A673 (cell line): ENCODE measurements at regions of chr5 and their contacts with region 1.

Region 1: GRCh38 chr5:76175051-76175666 is 92.0 kb downstream of the SV2C start:
- DNase-seq: peak; percentile 68
- H3K4me3 ChIP-seq: no peak overlapping the region
- H3K27ac ChIP-seq: no peak overlapping the region
- H3K4me1 ChIP-seq: no peaks in the 10 kb centered on the region
- H3K27me3 ChIP-seq: no peaks in the 10 kb centered on the region
- CTCF ChIP-seq: peak; percentile 92

Region 2: DNA sequence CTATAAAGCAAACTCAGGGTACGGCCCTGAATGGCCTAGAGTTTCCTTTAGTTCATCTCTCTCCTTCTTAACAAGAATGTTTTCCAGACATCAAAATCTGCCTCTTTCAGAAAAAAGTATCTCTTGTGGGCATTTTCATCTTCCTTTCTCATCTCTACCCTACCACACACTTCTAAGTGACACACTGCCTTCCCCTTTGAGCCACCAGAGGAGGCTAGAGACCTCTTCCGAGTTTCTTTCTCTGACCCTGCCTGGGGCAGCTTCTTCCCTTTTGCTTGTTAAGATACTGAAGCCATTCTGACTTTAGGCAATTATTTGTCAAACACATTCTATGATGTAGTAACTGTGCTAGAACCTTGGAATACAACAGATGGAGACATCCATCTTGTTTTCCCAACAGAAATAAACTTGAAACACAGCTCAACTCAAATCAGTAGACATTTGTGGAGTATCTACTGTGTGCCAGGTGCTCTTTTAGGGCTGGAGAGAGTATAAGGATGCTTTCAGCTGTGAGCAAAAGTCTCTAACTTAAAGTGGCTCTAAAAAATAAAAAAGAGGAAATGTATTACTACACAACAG is 100.6 kb before region 1 on chr5:
- CTCF ChIA-PET with region 1: interaction called, 10 read pairs
- POLR2A ChIA-PET with region 1: no interaction called
- intact Hi-C with region 1: no loop called
- DNase-seq: peak; percentile 56
- H3K4me3 ChIP-seq: no peak overlapping the region
- H3K27ac ChIP-seq: no peak overlapping the region
- H3K4me1 ChIP-seq: no peaks in the 10 kb centered on the region
- H3K27me3 ChIP-seq: peaks cover 30% of the 10 kb centered on the region
- CTCF ChIP-seq: peak; percentile 74

Region 3: DNA sequence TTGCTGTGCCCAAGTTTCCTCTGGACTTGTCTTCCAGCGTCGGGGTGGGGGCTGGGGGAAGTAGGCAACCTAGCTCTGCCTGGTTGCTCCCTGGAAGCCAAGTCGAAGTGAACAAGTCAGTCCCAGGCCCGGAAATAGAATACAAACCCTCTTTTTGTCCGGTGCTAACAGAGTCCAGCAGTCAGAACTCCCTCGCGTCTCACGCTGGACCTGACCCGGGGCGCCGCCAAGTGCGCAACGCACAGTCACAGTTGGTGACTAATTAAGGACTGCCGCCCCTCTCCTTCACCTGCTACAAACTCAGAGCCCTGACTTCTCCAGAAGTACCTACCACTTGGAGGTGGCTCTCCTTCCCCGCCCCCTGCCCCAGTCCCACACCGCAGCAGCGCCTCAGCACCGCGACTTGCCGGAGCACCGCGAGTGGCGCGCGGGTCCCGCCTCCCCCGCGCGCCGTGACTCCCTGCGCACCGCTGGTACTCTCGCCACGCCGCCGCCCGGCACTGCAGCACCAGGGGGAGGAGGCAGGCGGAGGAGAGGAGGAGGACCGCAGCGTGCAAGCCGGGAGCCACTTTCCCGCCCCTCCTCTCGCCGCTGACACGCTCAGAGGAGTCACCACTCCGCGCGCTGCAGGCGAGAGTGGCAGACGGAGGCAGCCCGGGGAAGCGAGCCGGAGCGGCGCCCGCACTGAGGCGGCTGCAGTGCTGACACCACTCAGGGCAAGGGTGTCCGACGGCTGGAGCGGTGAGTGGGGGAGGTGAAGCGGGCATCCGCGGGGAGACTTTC is 92.2 kb before region 1 on chr5 and contains the start of gene SV2C:
- CTCF ChIA-PET with region 1: no interaction called
- POLR2A ChIA-PET with region 1: no interaction called
- intact Hi-C with region 1: loop called (anchors 5 kb)
- DNase-seq: peak; percentile 52
- H3K4me3 ChIP-seq: peak within 1 kb of the TSS; percentile 47
- H3K27ac ChIP-seq: peak within 1 kb of the TSS; percentile 70
- H3K4me1 ChIP-seq: peaks cover 6% of the 10 kb centered on the region
- H3K27me3 ChIP-seq: peaks cover 87% of the 10 kb centered on the region
- CTCF ChIP-seq: no peak
- total RNA-seq, gene SV2C: 3.1 and 4.1 TPM in 2 replicates